Panc1 (cell line): ENCODE measurements at regions of chr12 and their contacts with region 1.

Region 1: DNA sequence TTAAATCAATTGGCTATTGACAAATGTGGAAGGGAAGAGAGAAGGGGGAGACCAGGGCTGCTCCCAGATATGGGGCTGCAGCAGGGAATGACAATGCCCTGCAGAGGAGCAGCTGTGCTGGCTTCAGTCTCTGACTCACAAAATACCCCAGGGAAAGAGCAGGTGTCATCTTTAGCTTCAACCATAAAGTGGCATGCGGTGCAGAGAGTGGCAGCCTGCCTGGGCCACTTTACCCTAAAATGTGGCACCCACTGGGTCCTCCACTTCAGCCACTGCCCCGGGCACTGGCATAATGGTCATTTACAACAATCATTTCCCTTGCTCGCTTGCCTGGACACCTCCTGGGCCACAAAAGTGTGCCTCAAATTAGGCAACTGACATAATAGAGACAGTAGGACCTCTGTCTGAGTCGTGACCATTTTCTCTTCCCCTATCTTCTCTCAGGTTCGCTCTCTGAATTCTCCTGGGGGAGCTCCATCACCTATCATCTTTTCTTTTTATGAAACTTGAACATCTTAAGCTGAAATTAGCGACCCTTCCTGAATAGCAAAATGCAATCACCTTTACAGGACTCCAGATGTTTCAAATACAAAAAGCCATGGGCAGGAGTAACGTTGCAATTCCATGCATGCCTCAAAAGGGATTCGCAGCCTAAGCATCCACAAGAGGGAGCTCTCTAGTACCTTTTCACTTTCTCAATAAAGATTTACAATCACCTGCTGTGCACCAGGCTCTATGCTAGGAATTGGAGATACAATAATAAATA is 179.9 kb upstream of the ATF7IP start:
- DNase-seq: peak; percentile 10
- ATAC-seq: peak; percentile 79
- H3K4me3 ChIP-seq: no peak overlapping the region
- H3K27ac ChIP-seq: no peak overlapping the region
- H3K4me1 ChIP-seq: no peaks in the 10 kb centered on the region
- H3K27me3 ChIP-seq: no peaks in the 10 kb centered on the region
- CTCF ChIP-seq: peak; percentile 78

Region 2: DNA sequence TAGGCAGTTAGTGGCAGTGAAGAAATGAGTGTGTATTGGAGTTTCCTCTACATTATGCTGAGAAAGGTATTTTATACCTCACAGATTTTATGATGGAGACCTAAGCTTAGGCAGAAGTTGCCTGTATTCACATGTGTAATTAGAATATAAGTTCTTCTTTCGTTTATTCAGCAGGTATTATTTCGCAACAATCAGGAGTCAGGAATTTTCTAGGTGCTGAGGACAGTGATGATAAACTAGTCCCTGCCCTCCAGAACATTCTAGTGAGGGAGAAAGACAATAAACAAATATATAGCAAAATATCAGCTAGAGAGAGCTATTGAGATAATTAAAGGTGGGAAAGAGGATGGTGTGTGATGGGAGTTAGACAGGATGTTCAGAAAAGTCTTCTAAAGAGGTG is 549.9 kb before region 1 on chr12:
- CTCF ChIA-PET with region 1: no interaction called
- POLR2A ChIA-PET with region 1: no interaction called
- in situ Hi-C with region 1: no loop called
- intact Hi-C with region 1: no loop called
- DNase-seq: no peak
- ATAC-seq: no peak
- H3K4me3 ChIP-seq: no peak overlapping the region
- H3K27ac ChIP-seq: no peak overlapping the region
- H3K4me1 ChIP-seq: no peaks in the 10 kb centered on the region
- H3K27me3 ChIP-seq: no peaks in the 10 kb centered on the region
- CTCF ChIP-seq: no peak

Region 3: DNA sequence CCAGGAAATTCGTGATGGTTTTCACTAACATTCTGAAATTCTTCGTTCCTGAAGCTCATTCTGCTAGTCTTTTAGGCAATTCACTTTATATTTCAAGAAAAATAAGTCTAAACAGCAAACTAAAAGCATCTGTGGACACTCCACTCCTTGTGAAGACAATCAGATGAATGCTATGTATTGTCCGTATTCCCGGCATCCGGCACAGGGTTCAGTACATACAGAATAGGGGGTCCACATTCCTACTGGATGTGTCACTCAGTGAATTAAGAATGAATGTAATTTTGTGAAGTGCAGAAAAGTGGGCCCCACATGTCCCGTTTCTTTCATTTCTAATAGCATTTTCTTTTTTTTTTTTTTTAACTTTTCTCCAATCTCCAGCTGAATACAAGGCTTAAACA is 445.5 kb before region 1 on chr12:
- CTCF ChIA-PET with region 1: interaction called, 10 read pairs
- POLR2A ChIA-PET with region 1: no interaction called
- in situ Hi-C with region 1: no loop called
- intact Hi-C with region 1: no loop called
- DNase-seq: no peak
- ATAC-seq: no peak
- H3K4me3 ChIP-seq: no peak overlapping the region
- H3K27ac ChIP-seq: no peak overlapping the region
- H3K4me1 ChIP-seq: no peaks in the 10 kb centered on the region
- H3K27me3 ChIP-seq: peaks cover 2% of the 10 kb centered on the region
- CTCF ChIP-seq: no peak

Region 4: DNA sequence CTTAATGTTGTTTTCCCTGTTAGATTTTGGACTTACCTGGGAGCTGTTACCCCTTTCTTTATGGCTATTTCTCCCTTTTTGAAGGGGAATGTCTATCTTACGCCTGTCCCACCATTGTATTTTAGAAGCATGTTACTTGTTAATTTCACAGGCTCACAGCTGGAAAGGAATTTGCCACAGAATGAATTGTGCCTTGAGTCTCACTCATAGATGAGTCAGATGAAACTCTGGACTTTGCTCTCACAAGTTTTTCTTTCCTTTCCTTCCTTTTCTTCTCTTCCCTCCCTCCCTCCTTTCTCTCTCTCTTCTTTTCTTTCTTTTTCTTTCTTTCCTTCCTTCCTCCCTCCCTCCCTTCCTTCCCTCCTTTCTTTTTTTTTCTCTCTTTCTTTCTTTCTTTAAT is 170.5 kb after region 1 on chr12:
- CTCF ChIA-PET with region 1: no interaction called
- POLR2A ChIA-PET with region 1: no interaction called
- in situ Hi-C with region 1: no loop called
- intact Hi-C with region 1: no loop called
- DNase-seq: no peak
- ATAC-seq: no peak
- H3K4me3 ChIP-seq: no peak overlapping the region
- H3K27ac ChIP-seq: no peak overlapping the region
- H3K4me1 ChIP-seq: no peaks in the 10 kb centered on the region
- H3K27me3 ChIP-seq: no peaks in the 10 kb centered on the region
- CTCF ChIP-seq: no peak

Region 5: GRCh38 chr12:14664510-14664909 is 478.9 kb after region 1 on chr12:
- CTCF ChIA-PET with region 1: no interaction called
- POLR2A ChIA-PET with region 1: no interaction called
- in situ Hi-C with region 1: no loop called
- intact Hi-C with region 1: loop called (anchors 5 kb)
- DNase-seq: peak; percentile 12
- ATAC-seq: no peak
- H3K4me3 ChIP-seq: no peak overlapping the region
- H3K27ac ChIP-seq: no peak overlapping the region
- H3K4me1 ChIP-seq: no peaks in the 10 kb centered on the region
- H3K27me3 ChIP-seq: no peaks in the 10 kb centered on the region
- CTCF ChIP-seq: peak; percentile 41; the same call in 1 of the 2 replicates